Ascending aorta (tissue), 2 donors: ENCODE measurements at regions of chr7 and their contacts with region 1.

Region 1: GRCh38 chr7:114085592-114086501 is 167.0 kb upstream of the PPP1R3A start:
- DNase-seq: peak; percentile 80 to 93
- H3K4me3 ChIP-seq: peak overlapping the region; percentile 84 to 89
- H3K27ac ChIP-seq: peak overlapping the region; percentile 91 to 98
- H3K4me1 ChIP-seq: peaks cover 0 to 6% of the 10 kb centered on the region in 2 donors
- H3K27me3 ChIP-seq: no peaks in the 10 kb centered on the region
- CTCF ChIP-seq: no peak

Region 2: GRCh38 chr7:112449902-112450806 is 1635.7 kb before region 1 on chr7 and contains the start of gene IFRD1:
- intact Hi-C with region 1: loop called (anchors 10 kb)
- DNase-seq: peak; percentile 95 to 100
- H3K4me3 ChIP-seq: peak within 1 kb of the TSS; percentile 78 to 96
- H3K27ac ChIP-seq: peak within 1 kb of the TSS; percentile 97 to 99
- H3K4me1 ChIP-seq: peaks cover 0 to 6% of the 10 kb centered on the region in 2 donors
- H3K27me3 ChIP-seq: no peaks in the 10 kb centered on the region
- CTCF ChIP-seq: no peak
- total RNA-seq, gene IFRD1: 35.1 TPM

Region 3: DNA sequence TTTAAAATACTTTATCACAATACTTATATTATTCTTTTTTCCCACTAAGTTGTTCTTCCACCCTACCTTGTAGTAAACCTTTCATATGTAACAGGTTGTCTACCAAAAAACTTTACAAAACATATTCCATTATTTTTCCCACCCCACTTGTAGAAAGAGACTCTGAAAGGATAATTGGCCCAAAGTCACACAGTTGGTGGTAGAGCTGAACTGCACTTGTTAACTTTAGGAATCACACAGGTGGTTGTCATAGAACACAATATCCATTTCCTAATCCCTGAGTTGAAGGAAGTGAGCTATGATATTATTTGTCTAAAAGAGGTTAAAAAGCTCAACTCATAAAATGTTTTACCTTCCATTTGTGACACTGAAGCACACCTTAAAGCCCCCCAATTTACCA is 139.9 kb after region 1 on chr7:
- intact Hi-C with region 1: no loop called
- DNase-seq: no peak
- H3K4me3 ChIP-seq: no peak overlapping the region
- H3K27ac ChIP-seq: no peak overlapping the region
- H3K4me1 ChIP-seq: peaks cover 0 to 4% of the 10 kb centered on the region in 2 donors
- H3K27me3 ChIP-seq: no peaks in the 10 kb centered on the region
- CTCF ChIP-seq: no peak

Region 4: GRCh38 chr7:114405427-114405826 is 319.6 kb after region 1 on chr7:
- intact Hi-C with region 1: loop called (anchors 2 kb)
- DNase-seq: no peak
- H3K4me3 ChIP-seq: no peak overlapping the region
- H3K27ac ChIP-seq: no peak overlapping the region
- H3K4me1 ChIP-seq: no peaks in the 10 kb centered on the region
- H3K27me3 ChIP-seq: no peaks in the 10 kb centered on the region
- CTCF ChIP-seq: peak; percentile 24 to 50 (median 37)

Region 5: DNA sequence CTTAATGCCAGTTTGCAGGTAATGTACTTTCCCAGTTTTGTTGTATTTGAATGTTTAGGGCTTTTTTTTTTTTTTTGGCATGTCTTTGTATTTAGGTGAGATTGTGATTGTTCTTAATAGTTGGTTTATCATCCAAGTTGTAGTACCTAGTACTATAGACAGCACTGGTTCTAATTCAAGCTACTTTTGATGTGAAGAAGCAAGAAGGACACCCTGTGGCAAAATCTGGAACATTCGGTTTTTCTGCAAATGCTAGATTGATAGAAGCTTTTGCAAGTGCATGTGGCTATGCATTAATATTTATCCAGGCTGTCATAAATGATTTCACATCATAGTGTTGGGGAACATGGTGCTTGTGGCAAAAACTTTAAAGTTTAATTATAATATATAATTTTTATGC is 577.7 kb after region 1 on chr7:
- intact Hi-C with region 1: loop called (anchors 10 kb)
- DNase-seq: no peak
- H3K4me3 ChIP-seq: no peak overlapping the region
- H3K27ac ChIP-seq: no peak overlapping the region
- H3K4me1 ChIP-seq: no peaks in the 10 kb centered on the region
- H3K27me3 ChIP-seq: no peaks in the 10 kb centered on the region
- CTCF ChIP-seq: peak in 1 of 3 experiments; percentile 17

Region 6: GRCh38 chr7:115851291-115851690 is 1765.4 kb after region 1 on chr7:
- intact Hi-C with region 1: loop called (anchors 5 kb)
- DNase-seq: no peak
- H3K4me3 ChIP-seq: no peak overlapping the region
- H3K27ac ChIP-seq: no peak overlapping the region
- H3K4me1 ChIP-seq: no peaks in the 10 kb centered on the region
- H3K27me3 ChIP-seq: no peaks in the 10 kb centered on the region
- CTCF ChIP-seq: peak in 1 of 3 experiments; percentile 35